Transverse colon (tissue), 4 donors: ENCODE measurements at regions of chrX and their contacts with region 1.

Region 1: DNA sequence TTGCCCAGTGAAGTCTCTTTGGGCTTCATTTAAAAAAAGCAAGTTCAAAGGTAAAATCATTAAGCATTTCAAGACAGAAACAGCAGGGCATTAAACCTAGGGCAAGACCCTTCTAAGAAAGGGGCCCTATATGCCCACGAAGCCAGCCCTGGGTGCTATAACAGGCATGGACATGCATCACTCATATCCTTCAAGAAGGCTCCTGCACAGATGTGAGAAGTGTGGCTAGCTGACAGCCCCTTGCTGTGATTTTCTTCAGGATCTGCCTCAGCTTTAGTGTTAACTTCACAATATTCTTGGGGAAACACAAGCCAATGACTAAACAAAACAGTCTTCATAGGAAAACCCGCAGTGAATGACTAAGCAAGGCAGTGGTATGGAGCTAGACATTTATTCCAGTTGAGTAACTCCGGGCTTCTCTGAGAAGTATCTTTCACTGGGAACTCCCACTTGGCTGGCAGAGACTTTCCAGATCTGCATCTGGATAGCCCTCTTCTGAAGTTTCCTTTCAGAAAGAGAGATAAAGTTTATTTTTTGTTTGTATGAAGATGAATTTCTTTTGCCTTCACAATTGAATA is 11.9 kb upstream of the MAOA start:
- DNase-seq: no peak
- H3K4me3 ChIP-seq: no peak overlapping the region
- H3K27ac ChIP-seq: peak overlapping the region in 1 of 4 donors; percentile 12
- H3K4me1 ChIP-seq: peaks cover 0 to 9% (median 1%) of the 10 kb centered on the region in 4 donors
- H3K27me3 ChIP-seq: no peaks in the 10 kb centered on the region
- CTCF ChIP-seq: no peak
- EP300 ChIP-seq: no peak
- POLR2A ChIP-seq: no peak

Region 2: DNA sequence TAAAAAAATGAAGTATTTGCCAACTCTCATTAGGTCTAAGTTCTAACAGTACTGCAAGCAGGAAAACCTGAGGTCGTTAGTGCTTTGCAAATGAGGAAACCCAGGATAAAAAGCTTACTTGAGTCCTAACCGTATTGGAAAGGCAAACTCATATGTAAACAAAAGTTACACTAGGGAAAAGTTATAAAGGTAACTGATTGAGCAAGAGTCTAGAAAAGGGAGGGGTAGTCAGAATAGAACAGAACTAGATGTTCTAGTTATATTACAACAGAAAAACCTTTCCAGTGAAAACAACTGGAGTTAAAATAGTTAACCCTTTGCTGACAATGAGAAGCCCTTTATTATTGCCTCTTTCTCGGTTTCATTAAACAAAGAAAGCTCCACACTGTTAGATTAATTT is 54.5 kb before region 1 on chrX:
- in situ Hi-C with region 1: loop called in 1 of 4 experiments (anchors 10 kb)
- intact Hi-C with region 1: no loop called
- DNase-seq: no peak
- H3K4me3 ChIP-seq: no peak overlapping the region
- H3K27ac ChIP-seq: peak overlapping the region; percentile 68 to 85 (median 80)
- H3K4me1 ChIP-seq: peaks cover 7 to 20% (median 11%) of the 10 kb centered on the region in 4 donors
- H3K27me3 ChIP-seq: no peaks in the 10 kb centered on the region
- CTCF ChIP-seq: no peak
- EP300 ChIP-seq: peak; percentile 81
- POLR2A ChIP-seq: no peak